AG04450 (cell line): ENCODE measurements at regions of chr11 and their contacts with region 1.

Region 1: GRCh38 chr11:122863704-122864326 is 18.7 kb upstream of the JHY start:
- DNase-seq: no peak
- H3K4me3 ChIP-seq: no peak overlapping the region
- H3K27ac ChIP-seq: no peak overlapping the region
- H3K27me3 ChIP-seq: peaks cover 22% of the 10 kb centered on the region
- CTCF ChIP-seq: peak; percentile 93

Region 2: GRCh38 chr11:122874991-122875390 is 11.2 kb after region 1 on chr11:
- CTCF ChIA-PET with region 1: interaction called, 53 read pairs
- POLR2A ChIA-PET with region 1: no interaction called
- DNase-seq: no peak
- H3K4me3 ChIP-seq: no peak overlapping the region
- H3K27ac ChIP-seq: no peak overlapping the region
- H3K27me3 ChIP-seq: peaks cover 16% of the 10 kb centered on the region
- CTCF ChIP-seq: no peak

Region 3: DNA sequence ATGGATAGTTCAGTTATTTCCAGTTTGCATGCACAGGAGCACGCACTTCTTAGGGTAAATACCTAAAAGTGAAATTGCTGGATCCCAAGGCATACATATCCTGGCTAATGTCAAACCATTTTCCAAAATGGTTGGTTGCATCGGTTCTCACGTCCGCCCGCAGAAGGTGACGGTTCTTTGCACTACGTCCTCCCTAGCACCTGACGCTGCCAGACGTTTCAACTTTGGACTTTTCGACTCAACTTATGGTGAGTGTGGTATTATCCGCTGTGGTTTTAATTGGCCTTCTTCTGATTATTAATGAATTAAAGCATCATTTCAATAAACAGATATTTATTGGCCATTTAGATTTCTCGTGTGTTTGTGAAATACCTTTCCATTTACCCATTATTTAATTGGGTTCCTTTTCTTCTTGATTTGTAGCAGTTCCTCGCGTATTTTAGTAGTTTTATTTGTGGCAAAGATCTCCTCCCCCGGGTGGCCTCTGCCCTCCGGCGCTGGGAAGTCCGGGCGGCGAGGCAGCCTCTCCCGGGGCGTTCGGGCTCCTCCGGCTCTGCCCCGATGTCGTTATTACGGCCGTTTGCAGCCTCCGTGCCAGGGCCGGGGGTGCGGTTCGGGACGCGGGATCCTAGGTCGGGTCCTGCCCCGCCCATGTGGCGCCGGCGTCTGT is 18.5 kb after region 1 on chr11 and contains the start of gene JHY:
- CTCF ChIA-PET with region 1: interaction called, 53 read pairs
- POLR2A ChIA-PET with region 1: no interaction called
- DNase-seq: no peak
- H3K4me3 ChIP-seq: peak within 1 kb of the TSS; percentile 61
- H3K27ac ChIP-seq: peak within 1 kb of the TSS; percentile 52
- H3K27me3 ChIP-seq: peaks cover 28% of the 10 kb centered on the region
- CTCF ChIP-seq: no peak
- polyA plus RNA-seq, gene JHY: 0.82 and 1.4 TPM in 2 replicates

Region 4: GRCh38 chr11:123033895-123034294 is 170.1 kb after region 1 on chr11:
- CTCF ChIA-PET with region 1: interaction called, 13 read pairs
- POLR2A ChIA-PET with region 1: no interaction called
- DNase-seq: no peak
- H3K4me3 ChIP-seq: no peak overlapping the region
- H3K27ac ChIP-seq: no peak overlapping the region
- H3K27me3 ChIP-seq: peaks cover 5% of the 10 kb centered on the region
- CTCF ChIP-seq: peak; percentile 39; the same call in 1 of the 2 replicates

Region 5: GRCh38 chr11:123054301-123055065 is 190.7 kb after region 1 on chr11:
- CTCF ChIA-PET with region 1: interaction called, 64 read pairs
- POLR2A ChIA-PET with region 1: interaction called, 3 read pairs
- DNase-seq: peak; percentile 39
- H3K4me3 ChIP-seq: no peak overlapping the region
- H3K27ac ChIP-seq: no peak overlapping the region
- H3K27me3 ChIP-seq: no peaks in the 10 kb centered on the region
- CTCF ChIP-seq: peak; percentile 74